Colonic mucosa (tissue), 4 donors: ENCODE measurements at regions of chr6 and their contacts with region 1.

Region 1: DNA sequence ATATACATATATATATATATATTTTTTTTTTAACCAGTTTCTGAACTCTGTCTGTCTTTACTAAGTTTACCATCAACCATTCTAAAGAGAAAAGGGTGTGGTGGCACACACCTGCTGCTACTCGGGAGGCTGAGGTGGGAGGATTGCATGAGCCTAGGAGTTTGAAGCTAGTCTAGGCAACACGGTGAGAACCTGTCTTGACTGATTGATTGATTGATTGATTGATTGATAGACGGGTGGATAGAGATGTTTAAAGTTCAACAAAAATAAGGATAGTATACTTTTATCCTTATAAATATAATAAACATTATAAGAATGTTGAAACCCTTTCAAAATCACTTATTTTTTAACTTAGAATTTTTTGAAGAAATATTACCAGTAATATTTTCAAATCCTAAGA is 30.2 kb downstream of the CEP57L1 start:
- DNase-seq: no peak
- H3K4me3 ChIP-seq: no peak overlapping the region
- H3K27ac ChIP-seq: no peak overlapping the region
- H3K4me1 ChIP-seq: no peaks in the 10 kb centered on the region
- H3K27me3 ChIP-seq: no peaks in the 10 kb centered on the region
- CTCF ChIP-seq: no peak

Region 2: GRCh38 chr6:109164322-109164721 is 38.8 kb after region 1 on chr6:
- intact Hi-C with region 1: loop called (anchors 5 kb)
- DNase-seq: no peak
- H3K4me3 ChIP-seq: no peak overlapping the region
- H3K27ac ChIP-seq: no peak overlapping the region
- H3K4me1 ChIP-seq: no peaks in the 10 kb centered on the region
- H3K27me3 ChIP-seq: no peaks in the 10 kb centered on the region
- CTCF ChIP-seq: no peak